Ascending aorta (tissue), 2 donors: ENCODE measurements at regions of chr7 and their contacts with region 1.

Region 1: GRCh38 chr7:134432296-134433152 is 26.4 kb downstream of the AKR1B1 start:
- DNase-seq: peak; percentile 65 to 93
- H3K4me3 ChIP-seq: peak overlapping the region; percentile 32 to 61
- H3K27ac ChIP-seq: peak overlapping the region; percentile 63 to 81
- H3K4me1 ChIP-seq: no peaks in the 10 kb centered on the region
- H3K27me3 ChIP-seq: no peaks in the 10 kb centered on the region
- CTCF ChIP-seq: peak; percentile 56 to 89 (median 71)

Region 2: DNA sequence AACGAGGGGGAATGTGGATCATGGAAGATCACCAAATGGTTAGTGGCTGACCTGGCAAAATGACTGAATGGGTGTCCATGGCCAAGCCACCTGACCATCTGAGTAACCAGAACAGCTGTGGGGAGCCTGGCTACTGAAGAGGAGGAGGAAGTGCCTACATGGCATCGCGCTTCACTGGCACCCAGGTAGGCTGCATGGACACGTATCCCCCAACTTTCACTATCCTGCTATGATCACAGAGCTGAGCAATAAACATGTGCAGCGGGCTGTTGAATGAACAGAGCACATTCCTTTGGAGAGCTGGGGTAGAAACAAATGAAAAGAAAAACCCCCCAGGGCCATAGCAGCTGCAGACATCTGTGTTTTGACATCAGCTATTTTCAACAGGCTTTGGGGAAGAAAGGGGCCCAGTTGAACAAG is 19.9 kb after region 1 on chr7:
- intact Hi-C with region 1: loop called (anchors 2 kb)
- DNase-seq: no peak
- H3K4me3 ChIP-seq: no peak overlapping the region
- H3K27ac ChIP-seq: no peak overlapping the region
- H3K4me1 ChIP-seq: peaks cover 0 to under 1% of the 10 kb centered on the region in 2 donors
- H3K27me3 ChIP-seq: no peaks in the 10 kb centered on the region
- CTCF ChIP-seq: no peak

Region 3: GRCh38 chr7:134514663-134515062 is 82.1 kb after region 1 on chr7:
- intact Hi-C with region 1: loop called (anchors 1 kb)
- DNase-seq: no peak
- H3K4me3 ChIP-seq: no peak overlapping the region
- H3K27ac ChIP-seq: no peak overlapping the region
- H3K4me1 ChIP-seq: peaks cover 0 to 12% of the 10 kb centered on the region in 2 donors
- H3K27me3 ChIP-seq: no peaks in the 10 kb centered on the region
- CTCF ChIP-seq: peak; percentile 62 to 80 (median 75)

Region 4: DNA sequence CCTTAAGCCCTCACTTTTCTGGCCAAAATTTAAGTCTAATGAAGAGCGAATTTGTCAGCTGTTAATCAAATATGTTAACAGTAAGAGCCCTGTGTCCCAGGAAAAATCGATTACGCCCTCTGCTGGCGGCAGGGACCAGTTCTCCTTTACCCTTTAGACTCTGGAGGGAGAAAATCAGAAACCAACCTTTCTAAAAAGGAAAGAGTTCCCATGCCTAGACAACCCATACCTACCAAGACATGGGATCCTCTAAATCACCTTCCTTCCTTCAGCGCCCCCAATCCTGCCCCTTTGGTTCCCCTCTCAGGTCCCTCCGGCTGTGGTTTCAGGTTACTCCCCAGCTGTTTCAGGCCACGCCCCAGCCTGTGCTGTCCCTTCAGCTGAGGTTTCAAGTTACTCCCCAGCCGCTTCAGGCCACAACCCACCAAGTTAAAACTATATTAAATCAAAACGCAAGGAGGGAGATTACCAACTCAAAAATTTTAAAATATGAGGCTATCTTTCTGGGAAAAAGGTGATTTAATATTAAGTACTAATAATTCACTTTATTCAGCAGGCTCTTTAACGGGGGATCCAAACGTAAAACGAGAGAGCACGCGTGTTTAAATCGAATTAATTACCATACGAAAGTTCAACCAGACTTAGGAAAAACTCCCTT is 115.0 kb after region 1 on chr7:
- intact Hi-C with region 1: loop called (anchors 1 kb)
- DNase-seq: peak in 1 of 2 donors; percentile 83
- H3K4me3 ChIP-seq: peak overlapping the region; percentile 53 to 57
- H3K27ac ChIP-seq: peak overlapping the region in 1 of 2 donors; percentile 25
- H3K4me1 ChIP-seq: no peaks in the 10 kb centered on the region
- H3K27me3 ChIP-seq: no peaks in the 10 kb centered on the region
- CTCF ChIP-seq: peak; percentile 57 to 86 (median 85)

Region 5: GRCh38 chr7:134605973-134606923 is 173.7 kb after region 1 on chr7:
- intact Hi-C with region 1: loop called (anchors 1 kb)
- DNase-seq: peak in 1 of 2 donors; percentile 77
- H3K4me3 ChIP-seq: peak overlapping the region in 1 of 2 donors; percentile 24
- H3K27ac ChIP-seq: no peak overlapping the region
- H3K4me1 ChIP-seq: no peaks in the 10 kb centered on the region
- H3K27me3 ChIP-seq: no peaks in the 10 kb centered on the region
- CTCF ChIP-seq: peak; percentile 84 to 92 (median 86)